CD8-positive, alpha-beta T cell (primary cell): ENCODE measurements at regions of chr2 and their contacts with region 1.

Region 1: GRCh38 chr2:120749506-120750431 is 14.1 kb downstream of the GLI2 start:
- DNase-seq: peak in 2 of 9 experiments; percentile 5 to 34
- ATAC-seq: no peak
- H3K4me3 ChIP-seq: no peak overlapping the region
- H3K4me3 Mint-ChIP-seq: no peak overlapping the region
- H3K27ac ChIP-seq: no peak overlapping the region
- H3K27ac Mint-ChIP-seq: no peak overlapping the region
- H3K4me1 ChIP-seq: no peaks in the 10 kb centered on the region
- H3K4me1 Mint-ChIP-seq: no peaks in the 10 kb centered on the region
- H3K27me3 ChIP-seq: no peaks in the 10 kb centered on the region
- H3K27me3 Mint-ChIP-seq: peaks cover 4% of the 10 kb centered on the region
- CTCF ChIP-seq: no peak

Region 2: GRCh38 chr2:118812552-118812951 is 1937.2 kb before region 1 on chr2:
- CTCF ChIA-PET with region 1: no interaction called
- POLR2A ChIA-PET with region 1: no interaction called
- intact Hi-C with region 1: loop called in 1 of 2 experiments (anchors 5 kb)
- DNase-seq: no peak
- ATAC-seq: no peak
- H3K4me3 ChIP-seq: no peak overlapping the region
- H3K4me3 Mint-ChIP-seq: no peak overlapping the region
- H3K27ac ChIP-seq: no peak overlapping the region
- H3K27ac Mint-ChIP-seq: no peak overlapping the region
- H3K4me1 ChIP-seq: peaks cover 4% of the 10 kb centered on the region
- H3K4me1 Mint-ChIP-seq: peaks cover 5% of the 10 kb centered on the region
- H3K27me3 ChIP-seq: peaks cover 2% of the 10 kb centered on the region in 2 experiments
- H3K27me3 Mint-ChIP-seq: peaks cover 59% of the 10 kb centered on the region
- CTCF ChIP-seq: no peak

Region 3: DNA sequence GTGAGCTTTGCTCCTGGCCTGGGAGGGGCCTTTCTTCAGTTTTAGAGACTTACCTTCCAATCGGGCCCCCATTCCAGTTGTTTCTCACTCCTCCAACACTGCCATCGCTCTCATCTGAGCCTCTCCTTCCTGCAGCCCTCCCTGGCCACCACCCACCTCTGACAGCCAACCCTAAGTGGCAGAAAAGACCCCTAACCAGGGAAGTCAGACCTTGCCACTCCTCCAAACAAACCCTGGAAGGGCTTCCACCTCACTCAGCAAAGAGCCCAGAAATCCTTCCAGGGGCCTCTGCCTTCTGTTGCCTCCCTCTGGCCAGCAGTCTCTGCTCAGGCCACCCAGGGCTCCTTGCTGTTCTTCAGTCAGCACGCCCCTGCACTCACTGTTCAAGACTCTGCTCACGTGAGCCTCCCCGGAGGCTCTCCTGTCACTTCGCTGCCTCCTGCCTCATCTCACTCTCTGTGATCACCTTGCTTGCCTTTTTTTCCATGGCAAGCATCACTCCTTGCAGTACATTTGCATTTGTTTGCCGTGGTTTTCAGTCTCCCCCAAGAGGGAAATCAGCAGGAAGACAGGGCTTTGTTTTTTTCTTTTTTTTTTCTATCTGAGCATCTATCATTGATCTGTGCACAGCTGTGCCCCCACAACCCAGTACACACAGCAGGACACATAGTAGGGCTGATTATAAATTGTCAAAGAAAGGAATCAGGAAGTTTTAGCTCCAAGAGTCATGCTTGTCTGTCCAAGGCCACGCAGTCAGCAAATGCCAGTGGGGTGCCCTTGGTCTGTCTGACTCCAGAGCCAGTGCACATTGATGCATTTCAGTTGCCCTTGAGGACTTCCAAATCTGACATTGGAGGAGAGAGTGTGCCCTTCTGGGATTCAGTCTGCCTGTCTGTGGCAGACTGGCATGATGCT is 319.9 kb before region 1 on chr2:
- CTCF ChIA-PET with region 1: no interaction called
- POLR2A ChIA-PET with region 1: no interaction called
- intact Hi-C with region 1: no loop called
- DNase-seq: peak in 1 of 9 experiments; percentile 37
- ATAC-seq: no peak
- H3K4me3 ChIP-seq: no peak overlapping the region
- H3K4me3 Mint-ChIP-seq: no peak overlapping the region
- H3K27ac ChIP-seq: no peak overlapping the region
- H3K27ac Mint-ChIP-seq: no peak overlapping the region
- H3K4me1 ChIP-seq: no peaks in the 10 kb centered on the region
- H3K4me1 Mint-ChIP-seq: no peaks in the 10 kb centered on the region
- H3K27me3 ChIP-seq: no peaks in the 10 kb centered on the region
- H3K27me3 Mint-ChIP-seq: peaks cover 9% of the 10 kb centered on the region
- CTCF ChIP-seq: no peak